Mammary epithelial cell (primary cell): ENCODE measurements at regions of chr1 and their contacts with region 1.

Region 1: GRCh38 chr1:181189691-181190363 is 101.3 kb downstream of the IER5 start:
- DNase-seq: peak; percentile 44
- H3K4me3 ChIP-seq: peak overlapping the region in 2 of 3 experiments; percentile 6 to 14
- H3K27ac ChIP-seq: no peak overlapping the region
- H3K4me1 ChIP-seq: peaks cover 5% of the 10 kb centered on the region
- H3K27me3 ChIP-seq: no peaks in the 10 kb centered on the region
- CTCF ChIP-seq: peak; percentile 79 to 95

Region 2: GRCh38 chr1:181310560-181310959 is 120.7 kb after region 1 on chr1:
- CTCF ChIA-PET with region 1: no interaction called
- dilution Hi-C with region 1: no loop called
- in situ Hi-C with region 1: no loop called
- intact Hi-C with region 1: no loop called
- DNase-seq: no peak
- H3K4me3 ChIP-seq: no peak overlapping the region
- H3K27ac ChIP-seq: no peak overlapping the region
- H3K4me1 ChIP-seq: no peaks in the 10 kb centered on the region
- H3K27me3 ChIP-seq: peaks cover 6% of the 10 kb centered on the region
- CTCF ChIP-seq: no peak

Region 3: GRCh38 chr1:181364801-181365200 is 175.0 kb after region 1 on chr1:
- CTCF ChIA-PET with region 1: no interaction called
- dilution Hi-C with region 1: no loop called
- in situ Hi-C with region 1: no loop called
- intact Hi-C with region 1: loop called (anchors 5 kb)
- DNase-seq: no peak
- H3K4me3 ChIP-seq: no peak overlapping the region
- H3K27ac ChIP-seq: no peak overlapping the region
- H3K4me1 ChIP-seq: no peaks in the 10 kb centered on the region
- H3K27me3 ChIP-seq: peaks cover 2% of the 10 kb centered on the region
- CTCF ChIP-seq: no peak

Region 4: DNA sequence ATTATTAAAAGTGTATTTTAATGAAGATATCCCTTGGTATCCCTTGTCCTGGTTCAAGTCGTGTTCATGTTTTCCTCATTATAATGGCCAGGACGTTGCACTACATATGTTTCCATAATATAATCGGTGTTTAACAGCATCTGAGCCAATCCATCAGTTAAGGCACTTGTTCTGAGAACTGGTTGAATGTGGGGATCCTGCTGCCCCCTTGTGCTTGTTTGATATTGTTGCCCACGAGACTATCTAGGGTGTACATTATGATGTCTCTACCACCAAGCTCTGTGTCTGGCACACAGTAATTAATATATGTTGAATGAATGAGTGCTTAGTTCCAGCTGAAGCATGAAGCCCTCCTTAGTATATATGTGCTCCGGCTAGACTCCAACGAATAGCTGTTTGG is 486.4 kb after region 1 on chr1:
- CTCF ChIA-PET with region 1: no interaction called
- dilution Hi-C with region 1: no loop called
- in situ Hi-C with region 1: no loop called
- intact Hi-C with region 1: loop called (anchors 5 kb)
- DNase-seq: peak; percentile 26
- H3K4me3 ChIP-seq: no peak overlapping the region
- H3K27ac ChIP-seq: no peak overlapping the region
- H3K4me1 ChIP-seq: no peaks in the 10 kb centered on the region
- H3K27me3 ChIP-seq: no peaks in the 10 kb centered on the region
- CTCF ChIP-seq: peak; percentile 42 to 62